Naive thymus-derived CD4-positive, alpha-beta T cell (primary cell): ENCODE measurements at regions of chr17 and their contacts with region 1.

Region 1: DNA sequence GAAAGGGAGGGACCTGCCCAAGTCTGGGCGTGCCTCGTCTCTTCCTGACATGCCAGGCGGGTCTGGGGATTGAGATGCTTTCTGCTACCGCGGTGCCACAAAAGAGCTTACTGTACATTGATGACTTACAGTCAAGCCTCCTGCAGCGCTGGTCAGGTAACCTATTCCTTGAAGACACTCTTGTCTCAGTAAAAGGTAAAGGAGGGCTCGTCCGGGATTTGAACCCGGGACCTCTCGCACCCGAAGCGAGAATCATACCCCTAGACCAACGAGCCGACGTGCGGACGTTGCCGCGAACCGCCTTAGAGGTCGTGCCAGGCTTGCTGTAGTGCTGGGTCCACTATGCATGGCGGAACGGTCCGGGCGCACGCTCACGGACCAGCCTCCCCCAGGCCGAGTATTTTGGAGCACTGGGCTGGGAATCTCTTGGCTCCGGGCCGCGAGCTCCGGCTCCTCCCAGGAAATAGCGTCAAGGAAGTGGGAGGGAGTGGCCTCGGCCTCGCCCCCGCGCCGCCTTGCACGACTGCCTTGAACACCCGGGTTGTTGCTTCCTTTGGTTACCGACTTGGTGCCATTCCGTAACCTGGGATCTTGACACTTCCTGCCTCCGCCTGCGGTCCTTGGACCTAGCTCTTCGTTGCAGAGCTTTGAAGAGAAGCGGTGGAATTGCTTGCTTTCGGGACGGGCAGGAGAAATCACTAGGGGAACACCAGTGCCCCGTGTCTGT is 12.4 kb upstream of the AURKB start:
- DNase-seq: peak; percentile 88 to 92 (median 91)
- ATAC-seq: peak; percentile 66
- H3K4me3 ChIP-seq: peak overlapping the region; percentile 99
- H3K4me3 Mint-ChIP-seq: peak overlapping the region; percentile 86 to 99 (median 92)
- H3K27ac ChIP-seq: peak overlapping the region; percentile 83
- H3K27ac Mint-ChIP-seq: peak overlapping the region; percentile 95 to 100 (median 99)
- H3K4me1 ChIP-seq: peaks cover 23 to 26% of the 10 kb centered on the region in 2 donors
- H3K4me1 Mint-ChIP-seq: peaks cover 30 to 81% (median 70%) of the 10 kb centered on the region in 7 donors
- H3K27me3 ChIP-seq: no peaks in the 10 kb centered on the region
- H3K27me3 Mint-ChIP-seq: peaks cover 0 to 17% (median 0%) of the 10 kb centered on the region in 5 donors

Region 2: DNA sequence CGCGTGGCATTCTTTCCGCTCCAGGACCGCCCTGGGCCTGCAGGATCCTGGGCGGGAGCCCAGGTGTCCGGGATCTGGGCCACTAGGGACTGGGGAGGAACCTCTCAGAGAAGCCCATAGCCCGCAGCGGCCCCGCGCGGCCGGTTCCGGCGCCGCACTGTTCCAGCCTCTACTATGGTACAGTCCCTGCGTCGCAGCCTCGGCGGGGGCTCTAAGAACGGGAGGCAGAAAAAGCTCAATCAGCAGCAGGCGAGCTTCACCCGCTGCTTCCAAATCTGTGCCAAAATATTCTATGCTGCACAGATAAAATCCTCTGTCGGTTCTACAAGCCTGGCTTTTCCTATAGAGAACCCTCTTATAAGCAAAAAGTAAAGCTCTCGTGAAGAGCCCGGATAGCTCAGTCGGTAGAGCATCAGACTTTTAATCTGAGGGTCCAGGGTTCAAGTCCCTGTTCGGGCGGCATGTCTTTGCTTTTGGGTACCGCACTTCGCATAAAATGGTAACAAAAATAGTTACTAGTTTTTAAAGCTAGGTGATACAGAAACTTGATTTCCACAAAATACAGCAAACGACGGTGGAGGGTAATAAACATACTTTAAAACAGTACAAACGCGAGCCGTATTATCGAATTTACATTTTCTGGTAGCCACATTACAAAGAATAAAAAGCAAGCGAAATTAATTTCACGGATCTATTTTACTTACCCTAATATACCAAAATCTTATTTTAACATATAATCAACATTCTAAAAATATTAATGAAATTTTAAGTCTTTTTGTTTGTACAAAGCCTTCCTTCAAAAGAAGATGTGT is 103.8 kb before region 1 on chr17:
- CTCF ChIA-PET with region 1: interaction called, 14 read pairs
- POLR2A ChIA-PET with region 1: interaction called, 51 read pairs
- intact Hi-C with region 1: loop called (anchors 1 kb)
- DNase-seq: peak; percentile 78 to 92 (median 90)
- ATAC-seq: peak; percentile 76
- H3K4me3 ChIP-seq: peak overlapping the region; percentile 95
- H3K4me3 Mint-ChIP-seq: peak overlapping the region; percentile 88 to 99 (median 94)
- H3K27ac ChIP-seq: peak overlapping the region; percentile 64
- H3K27ac Mint-ChIP-seq: peak overlapping the region; percentile 94 to 100 (median 99)
- H3K4me1 ChIP-seq: peaks cover 44 to 46% of the 10 kb centered on the region in 2 donors
- H3K4me1 Mint-ChIP-seq: peaks cover 27 to 61% (median 53%) of the 10 kb centered on the region in 7 donors
- H3K27me3 ChIP-seq: peaks cover 0 to 12% of the 10 kb centered on the region in 2 donors
- H3K27me3 Mint-ChIP-seq: peaks cover 9 to 77% (median 45%) of the 10 kb centered on the region in 5 donors

Region 3: DNA sequence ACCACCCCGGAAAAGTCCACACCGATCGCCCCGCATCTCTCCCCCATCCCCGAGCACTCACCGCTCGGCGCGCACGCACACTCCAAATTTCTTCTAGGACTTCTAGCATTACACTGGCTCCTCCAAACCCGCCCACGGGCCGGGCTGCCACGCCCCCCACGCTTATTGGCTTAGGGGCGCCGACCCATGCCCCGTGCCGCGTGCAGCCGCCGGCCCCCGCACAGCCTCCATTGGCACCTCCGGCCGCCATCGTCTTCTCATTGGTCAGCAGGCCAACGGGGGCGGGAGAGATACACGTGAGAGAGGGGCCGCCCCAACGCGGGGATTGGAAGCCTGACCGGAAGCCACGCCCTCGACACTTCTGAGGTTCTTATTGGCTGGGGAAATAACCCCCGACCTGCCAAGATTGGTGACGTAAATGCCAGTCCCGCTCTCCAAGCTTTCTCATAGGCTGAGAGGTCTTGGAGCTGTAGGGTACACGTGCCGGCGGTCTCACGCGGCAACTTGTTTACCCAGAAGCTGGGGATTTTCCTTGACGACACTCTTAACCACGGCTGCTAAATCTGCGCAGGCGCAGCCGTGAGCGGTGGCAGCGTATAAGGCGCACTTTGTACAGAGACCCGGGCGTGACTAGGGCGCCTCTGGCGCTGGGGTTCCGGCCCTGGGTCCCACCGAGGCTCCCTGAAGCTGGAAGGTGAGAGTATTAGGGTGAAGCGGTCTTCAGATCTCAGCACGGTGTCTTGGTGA is 66.4 kb before region 1 on chr17:
- CTCF ChIA-PET with region 1: interaction called, 5 read pairs
- POLR2A ChIA-PET with region 1: interaction called, 154 read pairs
- intact Hi-C with region 1: loop called (anchors 1 to 2 kb)
- DNase-seq: peak; percentile 96 to 100 (median 100)
- ATAC-seq: peak; percentile 83
- H3K4me3 ChIP-seq: peak overlapping the region; percentile 93
- H3K4me3 Mint-ChIP-seq: no peak overlapping the region
- H3K27ac ChIP-seq: peak overlapping the region; percentile 97
- H3K27ac Mint-ChIP-seq: no peak overlapping the region
- H3K4me1 ChIP-seq: peaks cover 58 to 75% of the 10 kb centered on the region in 2 donors
- H3K4me1 Mint-ChIP-seq: peaks cover 33 to 73% (median 65%) of the 10 kb centered on the region in 7 donors
- H3K27me3 ChIP-seq: no peaks in the 10 kb centered on the region
- H3K27me3 Mint-ChIP-seq: no peaks in the 10 kb centered on the region

Region 4: DNA sequence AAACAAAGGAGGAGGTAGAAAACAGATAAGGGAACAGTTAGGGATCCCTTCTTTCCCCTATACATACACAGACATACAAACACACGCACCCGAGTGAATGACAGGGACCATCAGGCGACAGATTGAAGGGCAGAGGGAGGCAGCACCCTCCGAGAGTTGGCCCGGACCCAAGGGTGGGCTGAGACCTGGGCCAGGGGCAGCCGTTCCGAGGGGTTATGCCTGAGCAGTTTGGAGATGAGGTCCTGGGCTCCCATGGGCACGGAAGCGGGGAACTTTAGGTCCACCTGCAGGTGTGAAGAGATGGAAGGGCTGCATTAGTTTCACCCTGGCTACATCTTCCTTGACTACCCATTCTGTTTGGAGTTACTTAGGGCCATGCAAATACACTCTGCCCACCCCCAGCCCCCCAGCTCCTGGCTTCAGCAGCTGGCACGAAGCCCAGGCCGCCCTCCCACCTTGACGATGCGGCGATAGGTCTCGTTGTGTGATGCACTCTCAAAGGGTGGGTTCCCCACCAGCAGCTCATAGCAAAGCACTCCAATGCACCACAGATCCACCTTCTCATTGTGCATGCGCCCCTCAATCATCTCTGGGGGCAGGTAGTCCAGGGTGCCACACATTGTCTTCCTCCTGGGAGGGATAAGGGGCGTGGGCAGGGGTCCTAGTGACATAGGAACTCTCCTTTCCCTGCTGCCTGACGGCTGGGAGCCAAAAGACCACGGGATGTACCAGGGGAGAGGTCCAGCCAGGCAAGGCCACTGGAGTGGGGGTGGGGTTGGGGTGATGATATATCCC is 17.8 kb before region 1 on chr17:
- CTCF ChIA-PET with region 1: no interaction called
- POLR2A ChIA-PET with region 1: interaction called, 110 read pairs
- intact Hi-C with region 1: loop called (anchors 1 kb)
- DNase-seq: no peak
- ATAC-seq: no peak
- H3K4me3 ChIP-seq: no peak overlapping the region
- H3K4me3 Mint-ChIP-seq: no peak overlapping the region
- H3K27ac ChIP-seq: no peak overlapping the region
- H3K27ac Mint-ChIP-seq: peak overlapping the region in 1 of 9 donors; percentile 38
- H3K4me1 ChIP-seq: peaks cover 0 to 2% of the 10 kb centered on the region in 2 donors
- H3K4me1 Mint-ChIP-seq: peaks cover 5 to 37% (median 7%) of the 10 kb centered on the region in 7 donors
- H3K27me3 ChIP-seq: no peaks in the 10 kb centered on the region
- H3K27me3 Mint-ChIP-seq: peaks cover 0 to 2% (median 0%) of the 10 kb centered on the region in 5 donors

Region 5: GRCh38 chr17:8288336-8289102 is 65.7 kb after region 1 on chr17 and contains the start of gene RANGRF:
- CTCF ChIA-PET with region 1: interaction called, 4 read pairs
- POLR2A ChIA-PET with region 1: interaction called, 19 read pairs
- intact Hi-C with region 1: loop called in 1 of 2 experiments (anchors 1 kb)
- DNase-seq: peak; percentile 64 to 86 (median 74)
- ATAC-seq: peak; percentile 95
- H3K4me3 ChIP-seq: peak within 1 kb of the TSS; percentile 95
- H3K4me3 Mint-ChIP-seq: peak within 1 kb of the TSS; percentile 92 to 100 (median 97)
- H3K27ac ChIP-seq: peak within 1 kb of the TSS; percentile 96
- H3K27ac Mint-ChIP-seq: peak within 1 kb of the TSS; percentile 89 to 98 (median 96)
- H3K4me1 ChIP-seq: peaks cover 8 to 24% of the 10 kb centered on the region in 2 donors
- H3K4me1 Mint-ChIP-seq: peaks cover 27 to 46% (median 43%) of the 10 kb centered on the region in 7 donors
- H3K27me3 ChIP-seq: no peaks in the 10 kb centered on the region
- H3K27me3 Mint-ChIP-seq: no peaks in the 10 kb centered on the region
- total RNA-seq, gene RANGRF: 26.0 to 46.1 (median 38.9) TPM

Region 6: DNA sequence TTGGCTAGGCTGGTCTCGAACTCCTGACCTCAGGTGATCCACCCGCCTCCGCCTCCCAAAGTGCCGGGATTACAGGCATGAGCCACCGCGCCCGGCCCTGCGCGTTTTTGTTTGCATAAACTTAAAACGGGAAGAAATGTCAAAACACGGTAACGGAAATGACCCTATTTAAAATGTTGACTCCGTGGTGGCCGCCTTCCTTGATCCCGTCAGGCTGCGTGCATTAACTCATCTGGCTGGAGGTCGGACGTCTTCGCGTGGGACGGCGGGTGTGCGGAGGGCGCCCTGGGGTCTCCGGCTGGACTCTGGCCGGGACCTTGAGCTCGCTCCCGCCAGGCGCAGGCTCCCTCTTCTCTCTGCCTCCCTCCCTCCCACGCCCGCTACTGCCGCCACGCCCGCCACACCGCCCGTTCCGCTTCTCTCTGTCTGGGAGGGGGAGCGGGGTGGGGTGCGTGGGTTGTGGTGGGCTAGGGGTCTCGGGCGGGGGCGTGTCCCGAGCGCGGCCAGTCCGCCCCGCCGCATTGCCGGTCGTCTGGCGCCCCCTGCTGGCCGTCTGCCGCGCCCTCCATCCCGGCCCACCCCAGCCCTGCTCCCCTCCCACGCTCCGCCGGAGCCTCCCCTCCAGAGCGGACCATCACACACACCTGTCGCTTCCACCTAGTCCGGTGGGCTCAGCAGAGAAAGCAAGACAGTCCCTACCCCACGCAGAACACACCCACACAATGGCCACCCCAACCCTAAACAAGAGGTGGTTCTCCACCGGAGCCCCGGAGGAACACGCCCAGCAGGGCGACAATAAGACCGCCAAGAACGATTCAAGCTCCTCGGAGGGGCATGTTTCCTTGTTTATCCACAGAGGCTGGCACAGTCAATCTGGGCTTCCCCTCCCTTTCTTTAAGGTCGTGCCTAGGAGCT is 523.0 kb after region 1 on chr17:
- CTCF ChIA-PET with region 1: no interaction called
- POLR2A ChIA-PET with region 1: no interaction called
- intact Hi-C with region 1: loop called in 1 of 2 experiments (anchors 10 kb)
- DNase-seq: peak; percentile 47 to 84 (median 70)
- ATAC-seq: peak; percentile 88
- H3K4me3 ChIP-seq: peak overlapping the region; percentile 80
- H3K4me3 Mint-ChIP-seq: peak overlapping the region; percentile 85 to 94 (median 91)
- H3K27ac ChIP-seq: peak overlapping the region; percentile 67
- H3K27ac Mint-ChIP-seq: peak overlapping the region; percentile 84 to 95 (median 88)
- H3K4me1 ChIP-seq: peaks cover 3 to 21% of the 10 kb centered on the region in 2 donors
- H3K4me1 Mint-ChIP-seq: peaks cover 2 to 34% (median 25%) of the 10 kb centered on the region in 7 donors
- H3K27me3 ChIP-seq: no peaks in the 10 kb centered on the region
- H3K27me3 Mint-ChIP-seq: peaks cover 0 to 21% (median 0%) of the 10 kb centered on the region in 5 donors